AG04449 (cell line): ENCODE measurements at regions of chr2 and their contacts with region 1.

Region 1: DNA sequence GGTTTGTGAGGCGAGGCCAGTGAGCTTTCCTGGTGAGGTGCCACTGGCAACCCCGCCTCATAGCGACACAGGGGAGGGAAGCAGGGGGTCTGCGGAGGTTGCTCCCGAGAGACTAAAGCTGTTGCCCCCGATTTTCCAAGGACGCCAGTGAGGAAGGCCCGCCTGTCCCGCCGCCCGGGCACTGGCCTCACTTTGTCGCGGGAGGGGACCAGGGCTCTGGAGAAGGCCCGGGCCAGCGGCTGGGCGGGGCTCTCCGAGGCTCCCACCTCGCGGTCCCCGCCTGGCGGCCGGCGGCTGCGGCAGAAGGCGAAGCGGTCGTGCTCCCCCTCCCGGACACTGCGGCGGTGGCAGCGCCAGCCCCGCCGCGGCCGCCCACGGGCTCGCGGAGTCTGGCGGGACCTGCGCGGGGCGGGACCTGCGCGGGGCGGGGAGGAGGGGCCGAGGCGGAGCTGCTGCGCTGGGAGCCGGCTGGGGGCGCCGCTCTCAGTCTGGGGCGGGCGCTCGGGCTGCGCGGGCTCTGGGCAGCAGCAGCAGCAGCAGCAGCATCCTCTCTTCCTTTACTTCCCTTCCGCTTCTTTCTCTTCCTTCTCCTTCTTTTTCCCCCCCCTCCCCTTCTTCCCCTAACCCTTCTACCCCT is at the start of gene MAP2:
- DNase-seq: no peak
- H3K4me3 ChIP-seq: peak within 1 kb of the TSS; percentile 67
- CTCF ChIP-seq: peak; percentile 87

Region 2: DNA sequence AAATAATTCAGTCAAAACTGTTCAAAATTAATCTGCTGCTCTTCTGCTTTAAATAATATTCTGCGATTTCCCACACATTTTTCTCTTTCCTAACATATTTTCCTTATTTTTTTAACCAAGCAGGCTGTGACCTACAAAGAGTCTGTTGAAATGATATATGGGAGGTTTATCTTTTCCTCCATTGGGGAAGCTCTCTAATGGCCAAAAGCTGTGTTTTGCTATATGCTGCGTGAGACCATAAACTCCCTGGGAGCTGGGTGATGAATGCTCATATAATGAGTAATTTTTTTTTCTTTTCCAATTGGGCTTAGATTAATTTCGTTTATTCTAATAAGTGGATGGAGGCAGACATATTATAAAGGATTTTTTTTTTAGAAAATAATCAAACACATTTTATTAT is 72.0 kb before region 1 on chr2:
- CTCF ChIA-PET with region 1: interaction called, 11 read pairs
- POLR2A ChIA-PET with region 1: no interaction called
- DNase-seq: peak; percentile 46
- H3K4me3 ChIP-seq: no peak overlapping the region
- CTCF ChIP-seq: no peak

Region 3: GRCh38 chr2:209398463-209398862 is 25.2 kb before region 1 on chr2:
- CTCF ChIA-PET with region 1: interaction called, 12 read pairs
- POLR2A ChIA-PET with region 1: no interaction called
- DNase-seq: no peak
- H3K4me3 ChIP-seq: no peak overlapping the region
- CTCF ChIP-seq: no peak

Region 4: DNA sequence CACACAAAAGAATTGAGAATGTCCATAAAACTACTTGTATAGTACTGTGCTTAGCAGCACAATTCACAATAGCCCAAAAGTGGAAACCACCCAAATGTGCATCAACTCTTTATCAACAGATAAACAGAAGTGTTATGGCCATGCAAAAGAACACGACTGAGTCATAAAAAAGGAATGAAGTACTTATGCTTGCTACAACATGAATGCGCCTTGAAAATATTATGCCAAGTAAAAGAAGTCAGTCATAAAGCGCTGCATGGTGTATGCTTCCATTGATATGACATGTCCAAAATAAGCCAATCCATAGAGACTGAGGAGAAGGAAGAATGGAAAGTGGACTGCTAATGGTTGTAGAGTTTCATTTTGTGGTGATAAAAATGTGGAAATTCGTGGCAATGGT is 12.0 kb before region 1 on chr2:
- CTCF ChIA-PET with region 1: interaction called, 11 read pairs
- POLR2A ChIA-PET with region 1: no interaction called
- DNase-seq: no peak
- H3K4me3 ChIP-seq: no peak overlapping the region
- CTCF ChIP-seq: no peak

Region 5: GRCh38 chr2:209556354-209556961 is 132.8 kb after region 1 on chr2:
- CTCF ChIA-PET with region 1: interaction called, 87 read pairs
- POLR2A ChIA-PET with region 1: no interaction called
- DNase-seq: no peak
- H3K4me3 ChIP-seq: no peak overlapping the region
- CTCF ChIP-seq: peak; percentile 66

Region 6: DNA sequence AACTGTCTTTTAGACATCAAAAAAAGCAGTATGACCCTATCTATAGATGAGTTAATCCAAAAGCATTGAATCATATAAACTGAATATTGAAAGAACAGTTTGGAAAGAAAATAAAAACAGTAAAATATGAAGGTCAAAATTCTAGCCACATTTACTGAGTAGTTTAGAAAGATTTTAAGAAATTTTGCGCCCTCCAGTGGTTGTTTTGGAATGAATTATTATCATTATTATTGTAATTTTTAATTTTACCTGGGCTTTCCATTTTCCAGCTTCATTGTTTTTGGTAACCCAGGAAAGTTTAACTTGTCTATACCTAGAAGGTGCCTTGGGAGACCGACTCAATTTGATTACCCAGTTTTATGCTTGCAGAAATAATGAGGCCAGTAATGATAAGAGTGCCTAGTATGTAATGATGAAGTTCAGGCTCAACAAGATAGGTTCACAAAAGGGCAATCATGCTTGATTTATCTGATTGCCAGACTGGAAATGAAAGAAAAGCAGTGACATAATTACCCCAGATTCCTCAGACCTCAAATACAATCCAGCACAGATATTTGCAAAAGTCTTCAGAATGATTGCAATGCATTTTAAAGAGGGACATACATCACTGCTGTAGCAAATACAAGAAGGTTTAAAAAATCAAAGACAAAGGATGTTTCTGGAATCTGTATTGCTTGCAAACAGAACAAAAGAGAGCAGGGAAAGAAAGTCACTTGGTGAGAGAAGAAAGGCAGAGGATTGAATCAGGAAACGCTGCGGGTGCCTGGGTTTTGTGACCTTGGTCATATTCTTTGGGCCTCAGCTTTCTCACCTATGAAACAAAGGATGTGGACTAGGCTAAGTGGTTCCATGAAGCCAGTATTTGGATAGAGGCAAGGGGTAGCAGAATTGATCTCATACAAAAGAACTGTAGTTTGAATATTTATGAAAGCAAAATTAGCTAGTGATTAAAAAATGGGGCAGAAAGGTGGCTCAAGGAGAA is 154.0 kb after region 1 on chr2:
- CTCF ChIA-PET with region 1: interaction called, 43 read pairs
- POLR2A ChIA-PET with region 1: interaction called, 3 read pairs
- DNase-seq: no peak
- H3K4me3 ChIP-seq: no peak overlapping the region
- CTCF ChIP-seq: no peak